Breast epithelium (tissue), 4 donors: ENCODE measurements at regions of chr11 and their contacts with region 1.

Region 1: DNA sequence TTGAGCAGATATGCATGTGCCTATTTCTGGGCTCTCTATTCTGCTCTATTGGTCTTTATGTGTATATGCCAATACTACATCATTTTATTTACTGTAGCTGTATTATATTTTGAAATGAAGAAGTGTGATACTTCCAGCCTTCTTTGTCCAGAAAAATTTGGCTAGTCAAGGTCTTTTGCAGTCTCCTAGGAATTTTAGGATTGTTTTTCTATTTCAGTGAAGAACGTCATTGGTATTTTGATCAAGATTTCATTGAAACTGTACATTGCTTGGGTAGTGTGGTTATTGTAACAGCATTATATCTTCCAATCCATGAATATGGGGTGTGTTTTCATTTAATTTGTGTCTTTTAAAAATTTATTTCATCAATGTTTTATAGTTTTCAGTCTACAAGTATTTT is 400.3 kb downstream of the AASDHPPT start:
- DNase-seq: no peak
- H3K4me3 ChIP-seq: no peak overlapping the region
- H3K27ac ChIP-seq: no peak overlapping the region
- H3K4me1 ChIP-seq: no peaks in the 10 kb centered on the region
- H3K27me3 ChIP-seq: no peaks in the 10 kb centered on the region
- CTCF ChIP-seq: no peak
- POLR2A ChIP-seq: no peak

Region 2: DNA sequence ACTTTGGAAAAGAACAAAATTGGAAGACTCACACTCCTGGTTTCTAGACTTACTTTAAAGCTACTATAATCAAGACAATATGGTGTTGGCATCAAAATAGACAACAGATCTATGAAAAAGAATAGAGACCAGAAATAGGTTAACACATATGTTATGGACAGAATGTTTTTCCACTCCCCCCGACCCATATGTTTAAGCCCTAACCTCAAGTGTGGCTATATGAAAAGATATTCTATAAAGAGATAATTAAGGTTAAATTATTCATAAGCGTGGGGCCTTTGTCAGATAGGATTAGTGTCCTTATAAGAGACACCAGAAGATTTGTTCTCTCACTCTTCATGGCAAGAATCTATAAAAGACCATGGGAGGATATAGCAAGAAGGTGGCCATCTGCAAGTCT is 39.6 kb after region 1 on chr11:
- intact Hi-C with region 1: loop called (anchors 5 kb)
- DNase-seq: no peak
- H3K4me3 ChIP-seq: no peak overlapping the region
- H3K27ac ChIP-seq: no peak overlapping the region
- H3K4me1 ChIP-seq: no peaks in the 10 kb centered on the region
- H3K27me3 ChIP-seq: no peaks in the 10 kb centered on the region
- CTCF ChIP-seq: no peak
- POLR2A ChIP-seq: no peak